Endothelial cell of umbilical vein (primary cell): ENCODE measurements at regions of chr1 and their contacts with region 1.

Region 1: GRCh38 chr1:15008783-15009729 is 144.5 kb upstream of the TMEM51 start:
- DNase-seq: peak; percentile 90
- H3K4me3 ChIP-seq: peak overlapping the region in 1 of 3 experiments; percentile 43
- H3K27ac ChIP-seq: peak overlapping the region; percentile 92
- H3K4me1 ChIP-seq: peaks cover 26% of the 10 kb centered on the region
- H3K27me3 ChIP-seq: no peaks in the 10 kb centered on the region
- CTCF ChIP-seq: no peak
- POLR2A ChIP-seq: peak; percentile 22

Region 2: GRCh38 chr1:14923727-14924452 is 85.2 kb before region 1 on chr1:
- CTCF ChIA-PET with region 1: no interaction called
- POLR2A ChIA-PET with region 1: no interaction called
- dilution Hi-C with region 1: no loop called
- intact Hi-C with region 1: loop called (anchors 1 kb)
- DNase-seq: peak; percentile 20
- H3K4me3 ChIP-seq: peak overlapping the region in 1 of 3 experiments; percentile 62
- H3K27ac ChIP-seq: no peak overlapping the region
- H3K4me1 ChIP-seq: peaks cover 5% of the 10 kb centered on the region
- H3K27me3 ChIP-seq: peaks cover 8 to 14% of the 10 kb centered on the region in 2 experiments
- CTCF ChIP-seq: no peak
- POLR2A ChIP-seq: no peak

Region 3: DNA sequence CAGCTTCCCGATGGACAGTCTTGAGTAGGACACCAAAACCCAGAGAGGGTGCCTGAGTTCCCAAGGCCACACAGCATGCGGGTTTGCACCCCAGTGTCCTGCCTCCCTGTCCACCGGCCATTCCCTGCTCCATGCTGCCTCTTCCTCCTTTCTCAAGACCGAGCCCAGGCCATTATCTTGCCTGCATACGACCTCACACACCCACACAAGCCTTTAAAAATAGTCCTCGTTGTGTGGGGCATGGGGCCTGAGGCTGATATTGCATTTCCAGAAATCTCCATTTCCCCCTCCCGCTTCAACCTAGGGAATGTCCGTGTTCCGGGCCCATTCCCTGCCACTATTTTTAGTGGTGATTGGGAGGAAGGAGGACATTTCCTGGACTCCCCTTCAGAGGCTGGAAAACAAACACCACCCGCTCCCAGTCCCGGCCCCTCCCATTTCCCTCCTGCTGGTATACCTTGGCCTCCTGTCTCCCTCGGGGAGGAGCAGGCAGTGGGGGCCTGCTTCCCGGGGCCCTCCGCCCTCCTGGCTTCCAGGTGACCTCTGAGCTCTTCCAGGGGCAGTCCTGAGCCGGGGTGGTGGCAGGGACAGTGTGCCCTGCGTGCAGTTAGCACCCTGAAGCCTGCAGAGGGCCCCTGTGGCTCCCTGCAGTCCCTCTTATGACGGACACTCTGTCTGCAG is 12.1 kb after region 1 on chr1:
- CTCF ChIA-PET with region 1: interaction called, 26 read pairs
- POLR2A ChIA-PET with region 1: no interaction called
- dilution Hi-C with region 1: no loop called
- intact Hi-C with region 1: loop called (anchors 1 kb)
- DNase-seq: peak; percentile 22
- H3K4me3 ChIP-seq: no peak overlapping the region
- H3K27ac ChIP-seq: no peak overlapping the region
- H3K4me1 ChIP-seq: peaks cover 13% of the 10 kb centered on the region
- H3K27me3 ChIP-seq: no peaks in the 10 kb centered on the region
- CTCF ChIP-seq: no peak
- POLR2A ChIP-seq: no peak

Region 4: DNA sequence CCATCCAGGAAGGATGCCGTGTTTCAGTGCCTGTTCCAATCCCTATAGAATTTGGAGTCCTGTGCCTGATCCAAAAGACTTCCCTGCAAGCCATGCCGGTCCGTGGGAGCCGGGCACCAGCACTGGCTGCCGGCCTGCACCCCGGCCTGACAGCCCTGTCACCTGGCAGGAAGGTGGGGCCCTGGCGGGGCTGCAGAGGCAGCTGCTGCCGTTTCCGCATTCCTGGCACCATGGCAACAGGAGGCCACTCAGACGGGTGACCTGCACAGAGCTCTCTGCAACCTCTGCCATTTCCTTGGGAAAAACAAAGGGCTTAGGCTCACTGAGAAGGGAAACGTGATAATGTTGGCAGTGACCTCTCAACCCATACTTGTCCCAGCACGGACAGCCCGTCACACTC is 81.3 kb after region 1 on chr1:
- CTCF ChIA-PET with region 1: no interaction called
- POLR2A ChIA-PET with region 1: no interaction called
- dilution Hi-C with region 1: no loop called
- intact Hi-C with region 1: loop called (anchors 1 kb)
- DNase-seq: peak; percentile 57
- H3K4me3 ChIP-seq: no peak overlapping the region
- H3K27ac ChIP-seq: no peak overlapping the region
- H3K4me1 ChIP-seq: peaks cover 11% of the 10 kb centered on the region
- H3K27me3 ChIP-seq: no peaks in the 10 kb centered on the region
- CTCF ChIP-seq: no peak
- POLR2A ChIP-seq: no peak

Region 5: DNA sequence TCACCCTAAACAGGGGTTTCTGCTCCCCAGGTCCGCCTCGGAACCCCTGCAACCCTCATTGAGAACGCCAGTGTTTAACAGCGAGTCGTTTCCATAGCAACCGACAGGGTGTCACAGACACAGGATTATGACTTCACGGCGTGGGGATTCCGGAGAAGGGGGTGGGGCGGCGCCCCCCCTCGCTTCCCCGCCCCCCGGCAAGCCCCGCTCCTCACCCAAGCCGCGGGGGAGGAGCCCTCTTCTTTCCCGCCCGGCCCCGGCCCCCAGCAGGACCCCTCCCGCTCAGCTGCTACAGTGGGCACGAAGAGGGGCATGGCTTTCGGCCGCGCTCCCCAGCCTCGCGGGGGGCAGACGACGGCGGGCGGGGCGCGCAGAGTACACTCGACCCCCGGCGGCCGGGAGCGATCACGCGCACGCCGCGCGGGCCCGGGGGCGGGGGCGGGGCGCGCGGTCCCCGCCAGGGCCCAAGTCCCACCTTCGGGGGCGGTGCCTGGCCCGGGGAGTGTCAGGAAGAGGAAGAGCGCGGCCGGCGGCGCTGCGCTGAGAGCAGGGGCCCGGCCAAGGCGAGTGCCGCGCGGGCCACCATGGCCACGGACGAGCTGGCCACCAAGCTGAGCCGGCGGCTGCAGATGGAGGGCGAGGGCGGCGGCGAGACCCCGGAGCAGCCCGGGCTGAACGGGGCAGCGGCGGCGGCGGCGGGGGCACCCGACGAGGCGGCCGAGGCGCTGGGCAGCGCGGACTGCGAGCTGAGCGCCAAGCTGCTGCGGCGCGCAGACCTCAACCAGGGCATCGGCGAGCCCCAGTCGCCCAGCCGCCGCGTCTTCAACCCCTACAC is 400.5 kb after region 1 on chr1 and contains the start of gene EFHD2:
- CTCF ChIA-PET with region 1: no interaction called
- POLR2A ChIA-PET with region 1: no interaction called
- dilution Hi-C with region 1: no loop called
- intact Hi-C with region 1: loop called (anchors 10 kb)
- DNase-seq: peak; percentile 73
- H3K4me3 ChIP-seq: peak within 1 kb of the TSS; percentile 82 to 90 (median 82)
- H3K27ac ChIP-seq: peak within 1 kb of the TSS; percentile 58
- H3K4me1 ChIP-seq: peaks cover 32% of the 10 kb centered on the region
- H3K27me3 ChIP-seq: no peaks in the 10 kb centered on the region
- CTCF ChIP-seq: no peak
- POLR2A ChIP-seq: peak; percentile 89
- total RNA-seq, gene EFHD2: 65.5 and 73.5 TPM in 2 replicates